ENCODE measurements at regions of chr19 and their contacts with region 1.

Region 1: GRCh38 chr19:5354403-5354802 is 13.8 kb upstream of the PTPRS start:
- DNase-seq: peak; percentile 34
- ATAC-seq: peak; percentile 77
- H3K4me3 ChIP-seq: no peak overlapping the region
- H3K27ac ChIP-seq: no peak overlapping the region
- H3K4me1 ChIP-seq: peaks cover 24% of the 10 kb centered on the region
- H3K27me3 ChIP-seq: peaks cover 0 to 1% of the 10 kb centered on the region in 2 experiments; a peak in 1 of 5 replicates
- CTCF ChIP-seq: peak; percentile 73
- EP300 ChIP-seq: no peak
- POLR2A ChIP-seq: no peak
- RAD21 ChIP-seq: peak; percentile 25; the same call in 1 of the 2 replicates

Region 2: DNA sequence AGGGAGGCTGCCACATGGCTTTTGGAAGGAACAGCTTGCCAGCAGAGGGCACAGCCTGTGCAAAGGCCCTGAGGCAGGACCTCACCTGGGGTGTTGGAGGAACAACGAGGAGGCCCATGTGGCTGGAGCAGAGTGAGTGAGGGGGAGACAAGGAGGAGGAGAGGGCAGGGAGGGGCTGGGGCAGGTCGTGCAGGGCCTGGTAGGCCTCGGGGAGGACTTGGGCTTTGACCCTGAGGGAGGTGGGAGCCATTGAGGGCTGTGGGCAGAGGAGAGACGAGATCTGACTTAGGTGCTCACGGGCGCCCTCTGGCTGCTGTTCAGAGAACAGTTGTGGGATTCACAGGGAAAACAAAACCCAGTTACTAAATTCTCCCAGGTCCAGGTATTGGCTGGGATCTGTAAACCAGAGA is 126.0 kb after region 1 on chr19:
- CTCF ChIA-PET with region 1: no interaction called
- POLR2A ChIA-PET with region 1: no interaction called
- in situ Hi-C with region 1: no loop called
- intact Hi-C with region 1: loop called (anchors 10 kb)
- DNase-seq: peak; percentile 30
- ATAC-seq: no peak
- H3K4me3 ChIP-seq: no peak overlapping the region
- H3K27ac ChIP-seq: no peak overlapping the region
- H3K4me1 ChIP-seq: peaks cover 26% of the 10 kb centered on the region
- H3K27me3 ChIP-seq: no peaks in the 10 kb centered on the region
- CTCF ChIP-seq: peak; percentile 68
- EP300 ChIP-seq: no peak
- POLR2A ChIP-seq: no peak
- RAD21 ChIP-seq: peak; percentile 33; the same call in 1 of the 2 replicates

Measured in HepG2 (cell line).